Activated CD4-positive, alpha-beta memory T cell treated with anti-CD3 and anti-CD28 coated beads, Interleukin-2, amount 10 ng/mL, durations not matched to agents 7 days and 5 days (primary cell): ENCODE measurements at regions of chr14 and their contacts with region 1.

Region 1: DNA sequence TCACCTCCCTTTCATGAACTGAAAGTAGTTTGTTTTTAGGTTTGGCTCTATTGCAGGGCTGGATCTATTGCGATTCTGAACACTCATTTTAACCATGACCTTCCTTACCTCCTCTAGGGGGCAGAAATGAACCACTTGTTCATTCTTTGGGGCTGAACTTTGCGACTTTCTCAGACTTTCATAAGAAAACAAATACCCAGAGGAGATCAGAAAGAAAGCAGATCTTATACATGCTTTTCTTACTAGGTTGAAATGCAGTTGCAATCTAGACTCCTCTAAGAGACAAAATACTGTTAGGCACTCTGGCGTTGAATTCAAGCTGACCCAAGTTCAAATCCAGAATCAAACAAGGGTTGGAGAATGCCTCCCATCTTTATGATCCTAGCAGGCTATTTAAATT is 32.6 kb upstream of the PLEKHG3 start:
- DNase-seq: no peak
- H3K4me3 Mint-ChIP-seq: no peak overlapping the region
- H3K27ac Mint-ChIP-seq: peak overlapping the region; percentile 5
- H3K4me1 Mint-ChIP-seq: peaks cover 48% of the 10 kb centered on the region
- H3K27me3 Mint-ChIP-seq: peaks cover 4% of the 10 kb centered on the region

Region 2: DNA sequence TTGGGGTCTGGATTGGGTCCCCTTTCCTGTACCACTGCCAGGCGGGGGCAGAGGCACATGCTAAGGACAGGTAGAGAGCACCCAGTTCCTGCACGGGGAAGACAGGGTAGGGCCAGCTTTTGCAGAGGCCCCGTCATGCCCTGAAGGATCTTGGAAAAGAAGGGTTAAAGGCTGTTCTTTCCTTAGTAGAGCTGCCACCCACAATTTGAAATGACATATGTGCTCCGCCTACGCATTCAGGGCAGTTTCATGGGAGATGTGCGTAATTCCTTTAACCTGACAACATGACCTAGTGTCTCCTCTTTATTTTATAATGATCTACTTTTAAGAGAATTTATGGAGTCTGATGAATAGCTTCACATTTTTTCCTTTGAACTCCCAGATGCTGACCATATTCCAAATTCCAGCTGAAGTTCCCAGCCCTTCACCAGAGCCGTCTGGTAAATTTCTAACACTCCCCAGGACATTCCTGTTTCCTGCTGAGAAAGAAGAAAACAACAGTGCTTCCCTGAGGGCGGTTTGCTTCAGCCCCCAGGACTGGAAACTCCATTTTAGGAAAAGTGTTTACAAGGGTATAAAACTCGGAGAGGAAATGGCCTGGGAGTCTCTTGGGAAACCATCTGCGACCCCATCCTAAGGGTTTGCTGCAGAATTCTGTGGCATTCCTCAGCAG is 26.2 kb before region 1 on chr14:
- CTCF ChIA-PET with region 1: no interaction called
- POLR2A ChIA-PET with region 1: no interaction called
- DNase-seq: no peak
- H3K4me3 Mint-ChIP-seq: no peak overlapping the region
- H3K27ac Mint-ChIP-seq: no peak overlapping the region
- H3K4me1 Mint-ChIP-seq: no peaks in the 10 kb centered on the region
- H3K27me3 Mint-ChIP-seq: peaks cover 25% of the 10 kb centered on the region

Region 3: GRCh38 chr14:64688811-64689281 is 17.3 kb after region 1 on chr14:
- CTCF ChIA-PET with region 1: interaction called, 11 read pairs
- POLR2A ChIA-PET with region 1: interaction called, 4 read pairs
- DNase-seq: no peak
- H3K4me3 Mint-ChIP-seq: no peak overlapping the region
- H3K27ac Mint-ChIP-seq: peak overlapping the region; percentile 18
- H3K4me1 Mint-ChIP-seq: peaks cover 50% of the 10 kb centered on the region
- H3K27me3 Mint-ChIP-seq: no peaks in the 10 kb centered on the region

Region 4: DNA sequence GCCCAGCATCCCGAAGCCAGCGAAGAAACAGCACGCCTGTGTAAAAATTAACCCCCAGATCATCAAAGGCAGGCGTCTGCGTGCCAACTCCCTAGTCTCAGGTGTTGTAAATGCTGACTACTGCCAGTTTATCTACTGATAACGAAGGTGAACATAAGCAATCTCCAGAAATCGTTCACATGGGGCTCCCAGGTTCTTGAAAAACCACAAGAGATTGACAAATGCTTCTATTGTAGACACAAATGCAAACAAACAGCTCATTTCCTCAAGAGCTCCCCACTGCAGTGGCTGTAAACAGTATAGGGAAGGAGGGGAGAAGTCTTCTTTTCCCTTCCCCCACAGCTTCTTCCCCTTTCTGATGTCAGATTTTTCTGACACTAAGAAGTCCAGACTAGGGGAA is 27.3 kb after region 1 on chr14:
- CTCF ChIA-PET with region 1: interaction called, 23 read pairs
- POLR2A ChIA-PET with region 1: interaction called, 64 read pairs
- DNase-seq: peak; percentile 55
- H3K4me3 Mint-ChIP-seq: no peak overlapping the region
- H3K27ac Mint-ChIP-seq: peak overlapping the region; percentile 80
- H3K4me1 Mint-ChIP-seq: peaks cover 84% of the 10 kb centered on the region
- H3K27me3 Mint-ChIP-seq: peaks cover 13% of the 10 kb centered on the region

Region 5: GRCh38 chr14:64720131-64720576 is 48.6 kb after region 1 on chr14:
- CTCF ChIA-PET with region 1: interaction called, 10 read pairs
- POLR2A ChIA-PET with region 1: interaction called, 27 read pairs
- DNase-seq: no peak
- H3K4me3 Mint-ChIP-seq: no peak overlapping the region
- H3K27ac Mint-ChIP-seq: peak overlapping the region; percentile 96
- H3K4me1 Mint-ChIP-seq: peaks cover 98% of the 10 kb centered on the region
- H3K27me3 Mint-ChIP-seq: no peaks in the 10 kb centered on the region

Region 6: GRCh38 chr14:64726585-64726890 is 54.9 kb after region 1 on chr14:
- CTCF ChIA-PET with region 1: interaction called, 10 read pairs
- POLR2A ChIA-PET with region 1: interaction called, 27 read pairs
- DNase-seq: peak; percentile 59
- H3K4me3 Mint-ChIP-seq: no peak overlapping the region
- H3K27ac Mint-ChIP-seq: peak overlapping the region; percentile 96
- H3K4me1 Mint-ChIP-seq: peaks cover 94% of the 10 kb centered on the region
- H3K27me3 Mint-ChIP-seq: no peaks in the 10 kb centered on the region

Region 7: DNA sequence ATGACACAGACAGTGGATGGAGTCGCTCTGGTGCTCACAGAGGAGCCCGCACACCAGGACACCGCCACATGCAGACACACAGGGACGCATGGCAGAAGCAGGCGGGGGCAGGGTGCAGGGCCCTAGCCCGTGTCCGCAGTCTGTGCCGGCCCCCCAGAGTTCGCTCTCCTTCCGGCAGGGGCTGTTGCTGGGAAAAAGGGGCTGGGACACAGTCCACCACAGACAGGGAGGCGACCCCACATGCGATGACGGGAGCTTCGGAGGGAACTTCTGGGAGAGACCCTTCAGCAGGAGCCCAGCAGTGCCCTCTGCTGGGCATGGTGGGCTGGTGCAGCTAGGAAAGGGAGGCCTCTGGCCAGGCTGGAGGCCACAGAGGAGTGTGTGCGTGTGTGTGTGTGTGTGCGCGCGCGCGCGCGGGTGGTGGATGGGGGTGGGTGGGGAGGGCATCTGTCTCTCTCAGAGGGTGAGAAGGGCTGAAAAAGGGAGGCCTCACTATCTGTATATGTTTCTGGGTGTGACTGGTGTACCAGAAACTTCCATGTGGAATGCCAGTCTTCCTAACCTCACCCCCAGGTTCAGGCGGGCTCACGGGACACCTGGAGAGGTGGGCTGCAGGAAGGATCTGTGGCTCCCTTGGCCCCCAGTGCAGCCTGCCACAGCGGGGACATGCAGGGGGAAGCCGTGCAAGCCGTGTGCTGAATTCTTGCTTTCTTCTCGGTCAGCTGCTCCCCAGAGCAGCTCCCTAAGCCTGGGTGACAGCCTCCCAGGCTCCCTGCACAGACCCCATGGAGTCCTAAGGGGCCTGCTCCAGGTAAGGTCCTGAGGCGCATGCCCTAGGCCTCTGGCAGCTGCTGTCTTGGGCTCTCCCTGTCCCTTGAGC is 93.3 kb after region 1 on chr14:
- CTCF ChIA-PET with region 1: interaction called, 87 read pairs
- POLR2A ChIA-PET with region 1: interaction called, 38 read pairs
- DNase-seq: peak; percentile 75
- H3K4me3 Mint-ChIP-seq: no peak overlapping the region
- H3K27ac Mint-ChIP-seq: no peak overlapping the region
- H3K4me1 Mint-ChIP-seq: peaks cover 65% of the 10 kb centered on the region
- H3K27me3 Mint-ChIP-seq: peaks cover 8% of the 10 kb centered on the region